Upper lobe of right lung (tissue), 1 donor: ENCODE measurements at regions of chr16 and their contacts with region 1.

Region 1: DNA sequence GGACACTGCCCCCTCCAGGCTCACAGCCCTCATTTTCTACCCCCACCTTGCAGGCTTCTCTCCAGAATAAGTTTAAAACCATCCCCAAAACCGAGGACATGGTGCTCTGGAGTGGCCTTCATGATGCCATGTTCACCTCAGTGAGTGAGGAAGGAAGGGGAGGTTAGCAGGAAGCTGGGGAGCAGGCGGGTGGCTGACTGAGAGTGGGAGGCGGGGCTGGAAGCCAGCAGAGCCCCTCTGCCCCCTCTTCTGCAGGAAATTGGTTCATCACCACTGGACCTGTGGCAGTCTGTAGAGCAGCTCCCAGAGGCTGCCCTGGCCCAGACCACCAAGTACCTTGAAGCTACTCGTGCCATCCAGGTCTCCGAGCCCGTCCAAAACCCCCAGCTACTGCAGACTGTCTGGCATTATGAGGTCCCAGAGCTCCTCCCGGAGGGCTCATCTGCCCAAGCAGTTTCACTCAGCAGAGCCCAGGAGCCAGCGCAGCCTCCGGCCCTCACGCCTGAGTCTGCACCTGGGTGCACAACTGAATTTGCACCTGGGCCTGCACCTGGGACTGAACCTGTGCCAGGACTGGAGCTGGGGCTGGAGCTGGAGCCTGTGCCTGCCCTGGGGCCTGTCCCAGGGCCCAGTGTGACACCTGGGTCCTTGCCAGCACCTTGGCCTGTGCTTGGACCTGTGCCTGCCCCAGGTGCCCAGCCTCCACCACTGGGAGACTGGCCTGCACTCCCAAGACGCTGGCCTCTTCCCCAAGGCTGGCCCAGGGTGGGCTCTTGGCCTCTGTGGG is 19.0 kb downstream of the C16orf96 start:
- DNase-seq: no peak
- ATAC-seq: peak; percentile 10
- H3K4me3 ChIP-seq: no peak overlapping the region
- H3K27ac ChIP-seq: no peak overlapping the region
- H3K4me1 ChIP-seq: no peaks in the 10 kb centered on the region
- H3K27me3 ChIP-seq: no peaks in the 10 kb centered on the region
- CTCF ChIP-seq: no peak

Region 2: DNA sequence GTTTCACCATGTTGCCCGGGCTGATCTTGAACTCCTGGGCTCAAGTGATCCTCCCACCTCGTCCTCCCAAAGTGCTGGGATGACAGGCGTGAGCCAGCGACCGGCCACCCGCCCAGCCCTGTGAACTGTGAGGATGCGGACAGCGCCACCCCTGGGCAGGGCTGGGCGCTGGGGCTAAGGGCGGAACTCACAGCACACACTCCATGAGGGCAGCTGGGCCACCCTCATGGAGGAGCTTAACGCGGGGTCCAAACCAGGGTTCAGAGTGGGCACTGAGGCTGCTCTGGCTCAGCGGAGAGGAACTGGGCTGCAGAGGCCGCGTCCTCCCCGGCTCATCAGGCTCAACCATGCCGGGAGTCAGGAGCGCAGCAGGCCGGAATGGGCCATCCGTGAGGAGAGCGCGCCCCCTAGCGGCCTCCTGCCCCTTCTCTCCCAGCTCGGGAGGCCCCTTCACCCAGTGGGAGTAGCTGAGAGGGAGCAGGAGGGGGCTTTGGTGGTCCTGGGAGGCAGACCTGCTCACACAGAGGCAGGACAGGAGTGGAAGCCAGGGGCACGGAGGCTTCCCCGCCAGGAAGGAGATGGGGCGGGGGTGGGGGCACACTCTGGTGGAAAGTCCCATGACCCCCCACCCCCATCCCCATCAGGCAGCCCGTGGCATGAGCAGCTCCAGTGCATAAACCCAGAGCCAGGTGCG is 172.5 kb before region 1 on chr16:
- intact Hi-C with region 1: no loop called
- DNase-seq: peak; percentile 92
- ATAC-seq: peak; percentile 95
- H3K4me3 ChIP-seq: no peak overlapping the region
- H3K27ac ChIP-seq: no peak overlapping the region
- H3K4me1 ChIP-seq: peaks cover 4% of the 10 kb centered on the region
- H3K27me3 ChIP-seq: no peaks in the 10 kb centered on the region
- CTCF ChIP-seq: peak; percentile 92

Region 3: DNA sequence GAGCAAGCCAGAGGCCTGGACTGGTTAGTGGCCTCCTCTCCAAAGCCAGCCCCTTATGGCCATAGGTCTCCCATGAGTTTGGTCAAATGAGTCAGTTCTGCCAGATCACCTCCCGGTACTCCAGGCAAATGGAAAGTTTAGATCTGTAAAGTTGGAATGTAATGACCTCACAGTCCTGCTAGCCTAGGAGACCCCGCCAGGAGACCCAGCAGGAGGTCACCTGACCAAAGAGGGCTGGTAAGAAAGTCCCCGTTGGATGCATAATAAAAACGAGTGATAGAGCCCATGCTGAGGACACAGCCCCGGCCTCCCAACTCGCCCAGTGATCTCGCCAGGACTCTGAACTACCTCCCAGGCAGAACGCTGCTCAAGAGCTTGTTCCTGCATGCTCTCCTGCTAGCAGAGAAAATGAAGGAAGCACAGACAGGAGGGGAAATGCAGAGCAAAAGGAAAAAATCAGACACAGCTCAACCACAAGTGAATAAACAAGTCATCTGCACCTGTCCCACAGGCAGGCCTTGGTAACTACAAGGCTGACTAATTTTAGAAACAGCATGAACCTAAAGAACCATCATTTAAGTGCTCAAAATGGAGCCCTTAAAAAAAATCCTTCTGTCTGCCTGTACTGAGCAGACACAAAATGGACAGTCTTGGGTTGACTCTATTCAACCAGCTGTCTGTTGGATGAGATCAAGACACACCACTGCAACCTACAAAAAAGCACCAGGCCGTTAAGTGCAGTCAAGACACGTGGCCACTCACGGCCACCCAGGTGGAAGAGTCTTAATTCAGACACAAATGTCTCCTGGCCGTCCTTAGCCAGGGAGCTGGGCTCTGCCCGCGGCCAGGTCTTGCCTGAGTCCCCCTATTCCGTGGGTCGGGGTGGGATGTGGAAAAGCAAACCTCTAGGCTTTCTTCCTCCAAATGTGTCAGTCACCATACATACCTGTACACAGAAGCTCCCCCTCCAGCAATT is 45.7 kb before region 1 on chr16:
- intact Hi-C with region 1: loop called (anchors 10 kb)
- DNase-seq: no peak
- ATAC-seq: no peak
- H3K4me3 ChIP-seq: no peak overlapping the region
- H3K27ac ChIP-seq: no peak overlapping the region
- H3K4me1 ChIP-seq: no peaks in the 10 kb centered on the region
- H3K27me3 ChIP-seq: no peaks in the 10 kb centered on the region
- CTCF ChIP-seq: no peak